B cell (primary cell): ENCODE measurements at regions of chr6 and their contacts with region 1.

Region 1: DNA sequence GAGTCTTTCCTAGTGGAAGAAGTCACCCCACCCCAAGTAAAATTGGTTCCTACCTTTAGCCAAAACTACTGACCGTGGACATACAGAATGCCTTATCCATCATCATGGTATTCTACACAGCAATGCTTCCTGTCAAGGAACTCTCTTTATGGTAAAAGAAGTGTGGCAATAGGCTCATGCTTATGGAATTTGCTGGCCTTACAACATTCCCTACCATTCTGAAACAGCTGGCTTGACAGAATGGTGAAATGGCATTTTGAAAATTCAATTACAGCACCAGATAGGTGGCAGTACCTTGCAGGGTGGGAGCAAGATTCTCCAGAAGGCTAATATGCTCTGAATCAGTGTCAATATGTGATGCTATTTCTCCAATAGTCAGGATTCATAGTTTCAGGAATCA is 41.8 kb upstream of the BACH2 start:
- DNase-seq: no peak
- ATAC-seq: no peak
- H3K4me3 ChIP-seq: no peak overlapping the region
- H3K4me3 Mint-ChIP-seq: no peak overlapping the region
- H3K27ac ChIP-seq: no peak overlapping the region
- H3K27ac Mint-ChIP-seq: no peak overlapping the region
- H3K4me1 ChIP-seq: no peaks in the 10 kb centered on the region
- H3K4me1 Mint-ChIP-seq: no peaks in the 10 kb centered on the region
- H3K27me3 ChIP-seq: no peaks in the 10 kb centered on the region
- H3K27me3 Mint-ChIP-seq: no peaks in the 10 kb centered on the region
- CTCF ChIP-seq: no peak

Region 2: GRCh38 chr6:90304308-90304707 is 34.1 kb before region 1 on chr6:
- CTCF ChIA-PET with region 1: no interaction called
- POLR2A ChIA-PET with region 1: interaction called, 11 read pairs
- intact Hi-C with region 1: no loop called
- DNase-seq: peak; percentile 75
- ATAC-seq: peak; percentile 90
- H3K4me3 ChIP-seq: peak overlapping the region in 1 of 5 experiments; percentile 26
- H3K4me3 Mint-ChIP-seq: peak overlapping the region; percentile 24
- H3K27ac ChIP-seq: peak overlapping the region; percentile 82 to 83
- H3K27ac Mint-ChIP-seq: peak overlapping the region; percentile 89
- H3K4me1 ChIP-seq: peaks cover 53 to 58% of the 10 kb centered on the region in 2 donors
- H3K4me1 Mint-ChIP-seq: peaks cover 52% of the 10 kb centered on the region
- H3K27me3 ChIP-seq: no peaks in the 10 kb centered on the region
- H3K27me3 Mint-ChIP-seq: no peaks in the 10 kb centered on the region
- CTCF ChIP-seq: no peak

Region 3: DNA sequence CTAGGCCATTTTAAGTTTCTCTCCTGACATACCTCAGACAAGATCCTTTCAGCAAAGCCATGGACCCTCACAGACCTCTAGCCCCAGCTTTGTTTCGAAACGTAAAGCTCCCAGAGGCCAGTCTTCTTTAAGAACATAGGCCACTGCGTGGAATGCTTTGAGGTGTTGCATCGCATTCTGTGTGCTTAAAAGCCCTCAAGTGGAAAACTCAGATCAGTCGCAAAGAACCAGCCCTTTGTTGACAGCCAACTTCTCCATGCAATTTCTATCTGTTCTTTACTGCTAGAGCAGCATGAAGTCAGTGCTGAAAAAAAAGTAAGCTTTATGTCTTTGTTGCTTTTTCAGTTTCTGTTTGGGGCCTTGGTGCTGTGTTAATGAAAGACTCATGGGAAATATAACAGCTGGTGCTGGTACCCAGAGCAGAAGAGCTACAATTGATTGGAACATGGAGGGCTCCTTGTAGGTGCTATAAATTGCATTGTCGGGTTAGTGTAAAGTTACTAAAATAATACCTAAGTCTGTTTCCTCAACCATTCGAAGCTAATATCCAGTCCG is 105.8 kb after region 1 on chr6:
- CTCF ChIA-PET with region 1: no interaction called
- POLR2A ChIA-PET with region 1: no interaction called
- intact Hi-C with region 1: no loop called
- DNase-seq: no peak
- ATAC-seq: no peak
- H3K4me3 ChIP-seq: no peak overlapping the region
- H3K4me3 Mint-ChIP-seq: no peak overlapping the region
- H3K27ac ChIP-seq: no peak overlapping the region
- H3K27ac Mint-ChIP-seq: no peak overlapping the region
- H3K4me1 ChIP-seq: no peaks in the 10 kb centered on the region
- H3K4me1 Mint-ChIP-seq: no peaks in the 10 kb centered on the region
- H3K27me3 ChIP-seq: no peaks in the 10 kb centered on the region
- H3K27me3 Mint-ChIP-seq: no peaks in the 10 kb centered on the region
- CTCF ChIP-seq: no peak